Calu3 (cell line): ENCODE measurements at regions of chr10 and their contacts with region 1.

Region 1: GRCh38 chr10:54402576-54402975 is 398.5 kb downstream of the PCDH15 start:
- DNase-seq: peak; percentile 37
- H3K4me3 Mint-ChIP-seq: no peak overlapping the region
- H3K27ac Mint-ChIP-seq: no peak overlapping the region
- H3K4me1 Mint-ChIP-seq: no peaks in the 10 kb centered on the region
- H3K27me3 Mint-ChIP-seq: no peaks in the 10 kb centered on the region
- CTCF ChIP-seq: peak; percentile 67

Region 2: DNA sequence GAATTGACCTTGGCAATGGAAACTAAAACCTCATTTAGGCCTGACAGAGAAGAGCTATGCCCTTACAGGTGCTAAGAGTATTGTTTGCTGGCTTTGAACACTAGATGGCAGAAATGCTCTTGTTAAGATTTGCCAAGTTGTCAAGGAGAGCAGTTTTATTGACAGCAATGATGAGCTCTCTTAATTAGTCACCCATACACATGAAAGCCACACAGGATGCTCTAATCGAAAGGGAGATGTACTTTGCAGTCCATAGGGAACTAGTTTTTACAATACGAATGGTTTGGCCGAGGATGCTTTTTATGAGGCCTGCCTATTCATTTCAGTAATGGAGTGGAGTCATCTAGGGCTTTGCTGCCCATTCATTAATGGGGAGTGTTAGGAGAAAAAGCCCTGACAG is 1584.6 kb before region 1 on chr10:
- CTCF ChIA-PET with region 1: no interaction called
- intact Hi-C with region 1: loop called (anchors 10 kb)
- DNase-seq: peak; percentile 30
- H3K4me3 Mint-ChIP-seq: no peak overlapping the region
- H3K27ac Mint-ChIP-seq: no peak overlapping the region
- H3K4me1 Mint-ChIP-seq: no peaks in the 10 kb centered on the region
- H3K27me3 Mint-ChIP-seq: no peaks in the 10 kb centered on the region
- CTCF ChIP-seq: peak; percentile 29

Region 3: DNA sequence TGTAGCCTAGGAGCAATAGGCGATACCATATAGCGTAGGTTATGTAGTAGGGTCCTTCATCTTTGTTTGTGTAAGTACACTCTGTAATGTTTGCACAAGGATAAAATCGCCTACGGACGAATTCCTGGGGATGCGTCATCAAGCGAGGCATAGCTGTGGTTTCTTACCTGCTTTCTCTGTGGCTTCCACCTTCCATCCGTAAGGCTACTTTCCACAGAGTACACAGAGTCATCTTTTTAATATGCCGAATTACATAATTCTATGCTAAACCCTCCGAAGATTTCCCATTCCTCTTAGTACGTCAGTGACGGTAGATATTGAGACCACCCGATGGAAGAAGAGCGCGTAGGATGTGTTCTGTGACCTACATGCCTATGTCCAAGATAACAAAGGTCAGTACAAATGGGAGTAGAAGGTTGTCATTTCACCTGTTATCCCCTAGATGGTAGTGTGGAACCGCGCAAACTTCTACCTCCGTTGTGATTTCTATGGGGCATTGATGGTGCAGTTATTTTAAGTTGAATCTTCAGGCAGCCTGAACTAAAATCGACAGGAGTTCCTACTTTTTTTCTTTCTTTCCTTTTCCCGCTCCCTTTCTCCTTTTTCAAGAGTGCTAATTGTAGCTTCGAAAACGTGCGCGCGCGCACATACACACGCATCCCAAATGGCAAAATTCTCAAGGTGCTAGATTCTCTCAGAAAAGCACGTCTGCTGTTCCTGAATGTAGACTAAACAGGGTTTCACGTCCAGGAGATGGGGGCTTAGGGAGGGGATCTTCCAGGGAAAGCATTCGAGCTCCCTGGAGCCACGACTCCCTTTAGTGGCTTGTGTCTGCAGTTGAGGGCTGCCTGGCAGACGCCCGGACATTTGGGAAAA is 1518.3 kb before region 1 on chr10:
- CTCF ChIA-PET with region 1: no interaction called
- intact Hi-C with region 1: loop called (anchors 5 kb)
- DNase-seq: peak; percentile 82
- H3K4me3 Mint-ChIP-seq: peak overlapping the region; percentile 63
- H3K27ac Mint-ChIP-seq: peak overlapping the region; percentile 70
- H3K4me1 Mint-ChIP-seq: no peaks in the 10 kb centered on the region
- H3K27me3 Mint-ChIP-seq: peaks cover 7% of the 10 kb centered on the region
- CTCF ChIP-seq: peak; percentile 75

Region 4: DNA sequence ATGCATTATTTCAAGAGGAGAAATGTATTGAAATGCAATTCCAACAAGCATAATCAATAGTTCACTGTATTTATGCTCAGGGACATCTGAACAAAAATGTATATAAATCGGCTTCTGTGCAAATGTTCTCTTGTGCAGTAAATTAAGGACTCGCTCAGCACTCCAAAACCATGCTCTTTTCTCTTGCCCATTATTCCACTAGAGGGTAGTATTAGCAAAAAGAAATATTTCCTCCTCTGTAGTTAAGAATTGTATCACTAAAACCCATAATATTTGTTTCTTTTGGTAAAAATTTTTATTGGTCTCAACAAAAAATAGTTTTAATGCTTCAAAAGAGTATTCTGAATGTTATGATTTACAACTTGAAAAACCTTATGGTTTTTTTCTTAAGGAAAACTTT is 404.6 kb before region 1 on chr10:
- CTCF ChIA-PET with region 1: no interaction called
- intact Hi-C with region 1: loop called (anchors 1 kb)
- DNase-seq: no peak
- H3K4me3 Mint-ChIP-seq: no peak overlapping the region
- H3K27ac Mint-ChIP-seq: no peak overlapping the region
- H3K4me1 Mint-ChIP-seq: no peaks in the 10 kb centered on the region
- H3K27me3 Mint-ChIP-seq: no peaks in the 10 kb centered on the region
- CTCF ChIP-seq: peak; percentile 29

Region 5: DNA sequence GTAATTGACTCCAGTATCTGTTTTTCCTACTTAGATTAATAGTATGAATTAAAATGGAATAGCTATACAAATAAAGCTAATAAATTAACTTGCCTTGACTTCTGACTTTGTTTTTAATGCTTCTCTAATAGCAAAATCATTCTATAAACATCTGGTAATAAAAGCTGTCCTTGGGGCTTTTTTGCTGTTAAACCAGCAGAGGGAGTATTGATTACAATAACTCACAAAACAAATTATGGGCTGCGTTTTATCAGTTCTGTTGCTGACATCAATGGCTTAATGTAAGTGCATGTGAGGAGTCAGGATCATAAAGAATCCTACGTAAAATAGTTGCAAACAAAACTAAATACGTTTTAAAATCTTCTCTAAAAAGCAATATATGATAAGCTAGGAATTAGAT is 269.4 kb before region 1 on chr10:
- CTCF ChIA-PET with region 1: no interaction called
- intact Hi-C with region 1: loop called (anchors 1 kb)
- DNase-seq: no peak
- H3K4me3 Mint-ChIP-seq: no peak overlapping the region
- H3K27ac Mint-ChIP-seq: no peak overlapping the region
- H3K4me1 Mint-ChIP-seq: no peaks in the 10 kb centered on the region
- H3K27me3 Mint-ChIP-seq: no peaks in the 10 kb centered on the region
- CTCF ChIP-seq: peak; percentile 27